ENCODE measurements at regions of chrX and their contacts with region 1.

Region 1: DNA sequence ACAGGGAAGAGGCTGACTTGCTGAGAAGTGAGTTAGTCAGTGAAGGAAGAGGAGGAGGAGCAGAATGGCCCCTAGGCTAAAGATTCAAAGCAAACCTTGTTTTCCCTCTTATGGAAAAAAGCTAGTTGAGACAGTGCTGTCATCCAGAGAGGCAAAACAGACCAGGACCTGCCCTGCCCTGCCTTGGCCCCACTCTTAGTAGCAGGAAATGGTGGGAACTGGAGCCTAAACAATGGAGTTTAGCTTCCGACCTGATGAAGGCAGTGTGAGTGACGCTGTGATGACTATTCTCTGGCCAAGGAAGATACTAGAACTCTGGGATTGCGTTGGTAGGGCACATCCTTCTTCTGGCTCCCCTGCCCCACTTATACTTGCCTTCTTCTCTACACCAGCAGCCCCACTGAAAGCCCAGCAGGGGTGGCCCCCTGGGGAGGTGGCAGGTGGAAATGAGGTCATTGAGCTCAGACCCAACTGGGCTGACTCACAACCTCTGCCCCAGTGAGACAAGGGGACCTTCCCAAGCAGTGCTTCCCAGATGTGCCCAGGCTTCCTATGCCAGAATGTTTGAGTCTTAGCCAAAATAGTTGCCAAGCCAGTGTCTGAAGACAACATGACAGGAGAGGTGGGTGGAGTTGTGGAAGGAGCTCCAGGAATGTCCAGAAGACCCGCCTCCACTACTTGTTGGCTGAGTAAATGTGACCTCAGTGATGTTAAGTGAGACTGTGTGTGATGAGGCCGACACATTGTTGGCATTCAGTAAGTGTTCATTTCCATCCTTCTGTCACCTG is 38.8 kb downstream of the MSN start:
- DNase-seq: peak in 1 of 4 donors; percentile 42
- ATAC-seq: peak; percentile 71
- H3K4me3 ChIP-seq: no peak overlapping the region
- H3K27ac ChIP-seq: peak overlapping the region; percentile 75 to 77
- H3K4me1 ChIP-seq: peaks cover 20 to 66% of the 10 kb centered on the region in 2 donors
- H3K27me3 ChIP-seq: no peaks in the 10 kb centered on the region
- CTCF ChIP-seq: no peak

Region 2: DNA sequence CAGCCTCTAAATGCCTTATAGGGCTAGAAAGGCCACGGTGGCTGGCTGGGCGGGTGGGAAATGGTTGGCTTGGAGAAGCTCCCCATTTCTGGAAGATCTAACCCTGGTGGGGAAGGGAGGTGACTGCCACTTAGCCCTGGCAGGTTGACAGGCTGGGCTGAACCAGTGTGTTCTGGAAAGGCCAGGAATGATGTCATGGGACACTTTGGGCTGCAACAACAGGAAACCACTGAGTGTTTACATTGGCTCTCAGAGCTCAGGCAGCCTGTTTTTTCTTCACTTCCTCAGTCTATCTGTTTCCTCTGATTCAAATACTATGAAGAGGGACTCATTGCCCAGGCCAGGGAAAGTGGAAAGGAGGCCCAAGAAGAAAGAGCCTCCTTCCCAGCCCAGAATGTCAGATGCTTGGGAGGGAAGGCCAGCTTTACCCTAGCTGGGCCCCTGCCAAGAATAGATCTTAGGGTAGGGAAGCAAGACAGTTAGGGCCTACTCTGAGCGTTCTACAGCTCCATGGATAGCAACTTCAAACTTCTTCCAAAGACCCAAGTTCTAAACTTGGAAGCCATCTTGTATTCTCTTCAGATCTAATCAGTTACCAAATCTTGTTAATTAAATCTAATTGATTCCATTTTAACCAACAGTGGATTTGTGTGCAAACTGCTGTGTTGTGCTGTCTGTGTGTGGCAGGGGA is 104.6 kb before region 1 on chrX:
- intact Hi-C with region 1: loop called in 1 of 2 experiments (anchors 10 kb)
- DNase-seq: peak; percentile 56 to 89 (median 78)
- ATAC-seq: peak; percentile 89
- H3K4me3 ChIP-seq: no peak overlapping the region
- H3K27ac ChIP-seq: peak overlapping the region; percentile 82 to 93
- H3K4me1 ChIP-seq: peaks cover 16 to 53% of the 10 kb centered on the region in 2 donors
- H3K27me3 ChIP-seq: no peaks in the 10 kb centered on the region
- CTCF ChIP-seq: peak in 1 of 2 donors; percentile 35

Region 3: GRCh38 chrX:65821721-65822496 is 115.7 kb after region 1 on chrX:
- intact Hi-C with region 1: no loop called
- DNase-seq: peak in 3 of 4 donors; percentile 20 to 86 (median 45)
- ATAC-seq: peak; percentile 88
- H3K4me3 ChIP-seq: peak overlapping the region; percentile 7 to 33
- H3K27ac ChIP-seq: no peak overlapping the region
- H3K4me1 ChIP-seq: no peaks in the 10 kb centered on the region
- H3K27me3 ChIP-seq: peaks cover 0 to 11% of the 10 kb centered on the region in 2 donors
- CTCF ChIP-seq: no peak

Measured in left lung (tissue), 14 donors.